CD4-positive, alpha-beta T cell (primary cell): ENCODE measurements at regions of chr12 and their contacts with region 1.

Region 1: DNA sequence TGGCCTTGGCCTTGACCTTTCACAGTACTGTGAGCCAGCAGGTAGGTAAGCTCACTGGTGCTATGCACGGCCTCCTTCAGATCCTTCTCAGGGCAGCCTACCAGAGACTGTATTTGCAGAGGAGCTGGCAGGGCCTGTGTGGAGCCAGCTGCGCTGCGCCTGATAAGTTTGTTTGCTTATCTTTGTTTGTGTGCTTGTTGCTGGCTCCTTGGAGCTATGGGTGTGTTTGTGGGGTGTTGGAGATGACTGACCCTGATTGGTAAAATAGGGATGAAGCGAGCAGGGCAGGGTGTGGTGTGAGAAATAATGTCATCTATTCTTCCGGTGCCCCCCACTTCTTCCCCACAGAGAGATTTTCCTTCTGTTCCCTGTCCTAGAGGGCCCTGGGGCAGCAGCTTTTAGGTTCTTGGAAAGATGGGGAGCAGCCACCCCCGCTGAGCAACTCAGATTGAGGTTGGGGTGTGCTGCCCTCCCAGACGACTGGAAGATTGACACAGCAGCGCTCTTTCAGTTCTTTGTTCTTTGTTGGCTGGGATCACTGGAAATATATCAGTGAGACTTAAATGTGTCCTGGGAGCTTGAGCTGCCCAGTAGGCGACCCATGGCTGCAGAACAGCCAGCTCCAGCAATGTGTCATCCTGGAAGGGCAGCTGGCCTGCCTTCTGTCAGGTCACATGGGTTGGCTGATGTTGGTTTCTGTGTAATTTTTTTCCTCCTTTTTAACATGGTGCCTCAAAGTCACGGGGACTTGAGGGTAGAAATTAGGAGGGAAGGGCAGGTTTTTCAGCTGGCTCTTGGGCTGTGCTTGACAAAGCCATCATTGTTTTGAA is 19.6 kb downstream of the MLXIP start:
- DNase-seq: peak in 1 of 14 experiments; percentile 34
- ATAC-seq: peak; percentile 33
- H3K4me3 ChIP-seq: no peak overlapping the region
- H3K4me3 Mint-ChIP-seq: peak overlapping the region; percentile 48
- H3K27ac ChIP-seq: peak overlapping the region; percentile 46 to 53
- H3K27ac Mint-ChIP-seq: peak overlapping the region; percentile 87
- H3K4me1 ChIP-seq: peaks cover 68% of the 10 kb centered on the region
- H3K4me1 Mint-ChIP-seq: peaks cover 67% of the 10 kb centered on the region
- H3K27me3 ChIP-seq: no peaks in the 10 kb centered on the region
- H3K27me3 Mint-ChIP-seq: no peaks in the 10 kb centered on the region
- CTCF ChIP-seq: no peak

Region 2: GRCh38 chr12:122087431-122088178 is 10.5 kb before region 1 on chr12:
- CTCF ChIA-PET with region 1: interaction called, 10 read pairs
- POLR2A ChIA-PET with region 1: interaction called, 110 read pairs
- intact Hi-C with region 1: loop called in 1 of 2 experiments (anchors 2 kb)
- DNase-seq: no peak
- ATAC-seq: no peak
- H3K4me3 ChIP-seq: no peak overlapping the region
- H3K4me3 Mint-ChIP-seq: peak overlapping the region; percentile 21
- H3K27ac ChIP-seq: no peak overlapping the region
- H3K27ac Mint-ChIP-seq: no peak overlapping the region
- H3K4me1 ChIP-seq: peaks cover 76% of the 10 kb centered on the region
- H3K4me1 Mint-ChIP-seq: peaks cover 71% of the 10 kb centered on the region
- H3K27me3 ChIP-seq: no peaks in the 10 kb centered on the region
- H3K27me3 Mint-ChIP-seq: no peaks in the 10 kb centered on the region
- CTCF ChIP-seq: no peak

Region 3: GRCh38 chr12:122148657-122149056 is 50.5 kb after region 1 on chr12:
- CTCF ChIA-PET with region 1: no interaction called
- POLR2A ChIA-PET with region 1: no interaction called
- intact Hi-C with region 1: no loop called
- DNase-seq: no peak
- ATAC-seq: no peak
- H3K4me3 ChIP-seq: no peak overlapping the region
- H3K4me3 Mint-ChIP-seq: no peak overlapping the region
- H3K27ac ChIP-seq: no peak overlapping the region
- H3K27ac Mint-ChIP-seq: peak overlapping the region; percentile 36
- H3K4me1 ChIP-seq: no peaks in the 10 kb centered on the region
- H3K4me1 Mint-ChIP-seq: peaks cover 3% of the 10 kb centered on the region
- H3K27me3 ChIP-seq: no peaks in the 10 kb centered on the region
- H3K27me3 Mint-ChIP-seq: no peaks in the 10 kb centered on the region
- CTCF ChIP-seq: no peak